K562 (cell line): ENCODE measurements at regions of chr6 and their contacts with region 1.

Region 1: DNA sequence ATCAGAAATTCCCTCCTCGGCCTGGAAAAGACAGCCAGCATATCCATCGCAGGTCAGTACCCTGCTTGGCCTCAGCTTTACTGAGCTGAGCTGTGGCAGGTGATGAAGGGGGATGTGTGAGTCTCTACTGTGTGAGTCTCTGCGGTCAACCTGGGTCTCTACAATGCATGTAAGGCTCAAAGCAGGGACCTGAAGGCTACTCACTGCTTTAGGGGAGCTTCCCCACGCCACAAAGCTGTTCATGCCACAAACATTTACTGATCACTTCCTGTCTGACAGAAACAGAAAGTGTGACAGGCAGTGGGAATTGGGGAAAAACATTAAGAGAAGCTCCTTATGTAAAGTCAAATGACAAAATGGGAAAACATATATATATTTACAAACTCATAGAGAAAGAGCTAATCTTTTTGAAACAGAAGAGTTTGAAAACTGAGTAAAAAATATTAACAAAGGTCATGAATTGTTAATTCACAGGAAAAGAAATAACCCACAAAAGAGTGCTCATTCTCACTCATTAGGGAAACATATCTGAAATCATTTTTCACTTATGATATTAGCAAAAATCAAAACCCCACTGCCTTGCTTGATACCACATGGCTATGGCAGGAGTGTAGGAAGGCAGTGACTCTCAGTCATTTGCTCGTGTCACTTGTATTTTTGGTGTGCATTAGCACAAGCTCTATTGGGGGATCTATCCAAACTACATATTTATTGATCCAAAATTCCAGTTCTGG is 5.8 kb downstream of the BTN3A3 start:
- DNase-seq: no peak
- ATAC-seq: peak; percentile 32; the same call in 2 of the 3 replicates
- H3K4me3 ChIP-seq: no peak overlapping the region
- H3K27ac ChIP-seq: no peak overlapping the region
- H3K4me1 ChIP-seq: 0 out of 5 replicates have a peak, but pooled peaks cover 0 to 3% of the 10 kb centered on the region in 2 experiments
- H3K27me3 ChIP-seq: no peaks in the 10 kb centered on the region
- CTCF ChIP-seq: no peak
- EP300 ChIP-seq: no peak
- POLR2A ChIP-seq: no peak
- RAD21 ChIP-seq: no peak

Region 2: GRCh38 chr6:26383624-26384417 is 62.3 kb before region 1 on chr6:
- CTCF ChIA-PET with region 1: no interaction called
- POLR2A ChIA-PET with region 1: no interaction called
- in situ Hi-C with region 1: no loop called
- intact Hi-C with region 1: no loop called
- DNase-seq: peak in 3 of 4 experiments; percentile 33 to 77 (median 40)
- ATAC-seq: peak; percentile 86
- H3K4me3 ChIP-seq: peak overlapping the region; percentile 65
- H3K27ac ChIP-seq: peak overlapping the region; percentile 78
- H3K4me1 ChIP-seq: peaks cover 13 to 27% of the 10 kb centered on the region in 2 experiments
- H3K27me3 ChIP-seq: no peaks in the 10 kb centered on the region
- CTCF ChIP-seq: no peak
- EP300 ChIP-seq: no peak
- POLR2A ChIP-seq: no peak
- RAD21 ChIP-seq: no peak

Region 3: GRCh38 chr6:26457264-26457805 is 11.2 kb after region 1 on chr6:
- CTCF ChIA-PET with region 1: no interaction called
- POLR2A ChIA-PET with region 1: interaction called, 21 read pairs
- in situ Hi-C with region 1: no loop called
- intact Hi-C with region 1: no loop called
- DNase-seq: peak in 3 of 4 experiments; percentile 37 to 50 (median 45)
- ATAC-seq: peak; percentile 64
- H3K4me3 ChIP-seq: peak overlapping the region; percentile 93
- H3K27ac ChIP-seq: peak overlapping the region; percentile 87
- H3K4me1 ChIP-seq: peaks cover 6 to 14% of the 10 kb centered on the region in 2 experiments; a peak in 3 of 5 replicates
- H3K27me3 ChIP-seq: no peaks in the 10 kb centered on the region
- CTCF ChIP-seq: no peak
- EP300 ChIP-seq: no peak
- POLR2A ChIP-seq: no peak
- RAD21 ChIP-seq: no peak

Region 4: GRCh38 chr6:26553635-26554446 is 107.7 kb after region 1 on chr6:
- CTCF ChIA-PET with region 1: no interaction called
- POLR2A ChIA-PET with region 1: no interaction called
- in situ Hi-C with region 1: no loop called
- intact Hi-C with region 1: no loop called
- DNase-seq: peak; percentile 62 to 93 (median 72)
- ATAC-seq: peak; percentile 66
- H3K4me3 ChIP-seq: peak overlapping the region; percentile 51
- H3K27ac ChIP-seq: peak overlapping the region; percentile 74
- H3K4me1 ChIP-seq: peaks cover 5 to 20% of the 10 kb centered on the region in 2 experiments; a peak in 4 of 5 replicates
- H3K27me3 ChIP-seq: no peaks in the 10 kb centered on the region
- CTCF ChIP-seq: no peak
- EP300 ChIP-seq: peak; percentile 73; the same call in 1 of the 2 replicates
- POLR2A ChIP-seq: no peak
- RAD21 ChIP-seq: no peak; a peak in 1 of 4 replicates

Region 5: GRCh38 chr6:26568601-26569432 is 122.7 kb after region 1 on chr6:
- CTCF ChIA-PET with region 1: no interaction called
- POLR2A ChIA-PET with region 1: no interaction called
- in situ Hi-C with region 1: no loop called
- intact Hi-C with region 1: no loop called
- DNase-seq: peak; percentile 82 to 96 (median 84)
- ATAC-seq: peak; percentile 75
- H3K4me3 ChIP-seq: peak overlapping the region; percentile 75
- H3K27ac ChIP-seq: peak overlapping the region; percentile 92
- H3K4me1 ChIP-seq: peaks cover 3 to 8% of the 10 kb centered on the region in 2 experiments; a peak in 2 of 5 replicates
- H3K27me3 ChIP-seq: no peaks in the 10 kb centered on the region
- CTCF ChIP-seq: peak; percentile 80 to 83 (median 81)
- EP300 ChIP-seq: peak; percentile 76
- POLR2A ChIP-seq: peak; percentile 24; the same call in 1 of the 2 replicates
- RAD21 ChIP-seq: peak; percentile 88 to 90